ENCODE measurements at regions of chr16 and their contacts with region 1.

Region 1: DNA sequence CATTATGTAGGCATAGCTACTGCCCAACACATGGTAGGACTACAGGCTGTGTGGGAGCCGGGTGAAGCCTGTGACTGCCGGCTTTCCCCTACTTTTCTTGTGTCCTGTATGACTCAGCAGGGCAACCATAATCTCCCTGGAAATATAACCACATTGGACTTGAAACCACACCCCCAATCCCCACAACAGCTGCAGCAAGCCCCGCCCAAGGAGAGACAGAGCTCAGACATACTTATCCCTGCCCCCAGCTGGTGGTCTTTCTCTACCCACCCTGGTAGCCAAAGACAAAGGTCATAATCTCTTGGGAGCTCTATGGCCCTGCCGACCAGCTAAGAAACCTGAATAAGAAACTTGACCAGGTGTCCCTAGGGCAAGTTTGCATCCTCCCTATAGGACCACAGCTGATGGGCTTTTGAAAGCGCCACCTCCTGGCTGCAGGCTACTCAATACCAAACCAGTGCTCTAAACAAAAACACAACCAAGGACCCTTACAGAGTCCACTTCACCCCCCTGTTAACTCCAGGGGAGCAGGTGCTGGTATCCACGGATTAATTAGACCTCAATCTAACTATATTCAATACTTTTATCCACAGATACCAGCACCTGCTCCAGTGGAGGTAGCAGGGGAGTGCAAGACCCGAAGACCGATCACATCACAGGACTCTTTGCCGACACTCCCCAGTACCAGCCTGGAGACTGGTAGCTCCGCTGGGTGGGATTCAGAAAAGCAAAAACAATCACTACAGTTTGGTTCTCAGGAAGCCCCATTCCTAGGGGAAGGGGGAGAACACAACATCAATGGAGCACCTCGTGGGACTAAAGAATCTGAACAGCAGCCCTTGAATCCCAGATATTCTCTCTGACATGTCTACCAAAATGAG is 91.2 kb downstream of the IRX5 start:
- DNase-seq: peak; percentile 15 to 63
- H3K4me3 ChIP-seq: peak overlapping the region in 2 of 4 experiments; percentile 10 to 19; a peak in 1 of 8 replicates
- H3K27ac ChIP-seq: no peak overlapping the region
- H3K4me1 ChIP-seq: no peaks in the 10 kb centered on the region
- H3K27me3 ChIP-seq: no peaks in the 10 kb centered on the region; a peak in 1 of 7 replicates
- CTCF ChIP-seq: peak; percentile 25 to 62 (median 52)
- EP300 ChIP-seq: no peak
- POLR2A ChIP-seq: no peak
- RAD21 ChIP-seq: peak; percentile 37 to 56

Region 2: DNA sequence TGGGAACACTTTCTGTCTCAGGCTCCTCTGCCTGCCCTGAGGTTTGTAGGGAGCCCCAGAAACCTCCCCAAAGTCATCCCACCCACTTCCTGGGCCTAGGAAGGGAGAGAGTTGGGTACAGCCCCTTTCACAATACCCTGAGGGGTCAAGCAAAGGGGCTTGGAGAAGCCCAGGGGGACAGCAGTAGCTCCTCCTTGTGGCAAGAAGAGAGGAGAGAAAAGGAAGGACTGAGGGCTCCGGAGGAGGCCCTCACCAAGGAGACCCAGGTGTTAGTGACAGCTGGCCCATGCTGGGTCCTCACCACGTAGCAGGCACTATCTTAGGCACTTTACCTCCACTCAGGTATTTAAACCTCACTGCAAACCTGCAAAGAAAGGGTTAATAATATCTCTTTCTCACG is 21.7 kb after region 1 on chr16:
- CTCF ChIA-PET with region 1: interaction called, 17 read pairs
- POLR2A ChIA-PET with region 1: no interaction called
- DNase-seq: no peak
- H3K4me3 ChIP-seq: no peak overlapping the region
- H3K27ac ChIP-seq: no peak overlapping the region
- H3K4me1 ChIP-seq: no peaks in the 10 kb centered on the region
- H3K27me3 ChIP-seq: 0 out of 7 replicates have a peak, but pooled peaks cover 0 to 2% (median 0%) of the 10 kb centered on the region in 4 experiments
- CTCF ChIP-seq: peak; percentile 24 to 45 (median 39)
- EP300 ChIP-seq: no peak
- POLR2A ChIP-seq: no peak
- RAD21 ChIP-seq: peak; percentile 14 to 50; a peak in 3 of 4 replicates

Region 3: GRCh38 chr16:55052741-55053415 is 31.0 kb after region 1 on chr16:
- CTCF ChIA-PET with region 1: interaction called, 11 read pairs
- POLR2A ChIA-PET with region 1: no interaction called
- DNase-seq: no peak
- H3K4me3 ChIP-seq: no peak overlapping the region
- H3K27ac ChIP-seq: no peak overlapping the region
- H3K4me1 ChIP-seq: peaks cover 0 to 7% (median 3%) of the 10 kb centered on the region in 4 experiments; a peak in 5 of 7 replicates
- H3K27me3 ChIP-seq: peaks cover 12 to 25% (median 20%) of the 10 kb centered on the region in 4 experiments
- CTCF ChIP-seq: no peak
- EP300 ChIP-seq: no peak
- POLR2A ChIP-seq: no peak
- RAD21 ChIP-seq: no peak

Region 4: DNA sequence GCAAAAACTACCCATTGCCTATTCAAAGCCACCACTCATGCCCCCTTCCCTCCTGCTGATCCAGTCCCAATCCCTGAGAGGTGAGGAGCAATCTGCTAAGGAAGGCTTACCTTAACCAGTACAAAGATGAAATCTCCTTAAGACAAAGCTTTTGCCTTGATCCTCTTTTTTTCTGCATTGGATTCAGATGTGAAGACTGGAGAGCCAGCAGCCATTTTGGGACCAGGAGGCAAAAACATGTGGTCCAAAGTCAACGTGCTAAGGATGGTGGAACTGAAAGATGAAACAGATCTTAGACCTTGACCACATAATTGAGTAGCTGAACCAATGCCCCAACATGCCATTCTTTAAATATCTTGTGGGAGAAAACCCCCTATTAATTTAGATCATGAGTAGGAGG is 80.2 kb after region 1 on chr16:
- CTCF ChIA-PET with region 1: no interaction called
- POLR2A ChIA-PET with region 1: no interaction called
- DNase-seq: no peak
- H3K4me3 ChIP-seq: no peak overlapping the region
- H3K27ac ChIP-seq: no peak overlapping the region
- H3K4me1 ChIP-seq: no peaks in the 10 kb centered on the region
- H3K27me3 ChIP-seq: no peaks in the 10 kb centered on the region; a peak in 1 of 7 replicates
- CTCF ChIP-seq: no peak
- EP300 ChIP-seq: no peak
- POLR2A ChIP-seq: no peak
- RAD21 ChIP-seq: no peak

Measured in H1 (cell line).